Activated CD4-positive, alpha-beta memory T cell treated with anti-CD3 and anti-CD28 coated beads, Interleukin-2, amount 10 ng/mL, durations not matched to agents 7 days and 5 days (primary cell): ENCODE measurements at regions of chr1 and their contacts with region 1.

Region 1: DNA sequence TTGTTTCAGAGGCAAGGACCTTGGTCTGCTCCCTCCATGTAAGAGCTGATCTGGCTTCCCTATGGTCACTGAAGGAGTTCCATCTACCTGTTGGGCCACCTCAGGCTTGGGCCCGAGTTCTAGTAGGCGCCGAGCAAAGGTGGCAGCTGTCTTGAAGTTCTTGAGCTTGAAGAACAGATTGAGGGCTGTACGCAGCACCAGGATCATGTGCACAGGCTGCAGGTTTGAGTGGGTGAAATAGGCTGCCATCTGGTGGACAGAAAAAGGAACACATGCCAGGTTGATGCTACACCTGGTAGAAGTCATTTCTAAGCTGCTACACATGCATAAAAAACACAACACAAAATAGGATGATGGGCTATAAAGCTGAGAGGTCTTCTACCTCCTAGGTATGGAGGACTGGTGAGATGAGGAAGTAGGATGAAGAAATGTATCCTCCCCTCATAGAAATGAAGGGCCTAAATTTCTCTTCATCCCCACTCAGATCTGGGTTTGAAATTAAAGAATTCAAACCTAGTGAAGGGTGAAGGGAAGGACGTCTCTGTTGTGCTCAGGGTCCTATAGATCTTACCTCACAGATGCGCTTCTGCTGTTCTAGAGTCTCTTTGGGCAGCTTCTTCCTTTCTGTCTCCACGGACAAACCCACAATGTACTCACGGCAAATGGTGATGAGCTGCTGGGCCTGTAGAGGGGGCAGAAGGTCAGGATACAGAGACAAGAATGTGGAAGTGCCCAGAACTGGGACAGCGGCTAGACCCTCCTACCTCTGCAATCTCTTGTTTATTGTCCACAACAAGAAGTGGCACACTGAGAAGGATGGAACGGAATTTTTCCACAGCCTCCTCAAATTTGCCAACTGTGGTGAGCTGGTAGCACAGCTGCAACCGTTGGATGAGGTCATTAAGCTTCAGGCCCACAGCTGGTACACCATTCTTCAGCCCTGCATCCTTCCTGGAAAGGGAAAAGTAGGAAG is 6.6 kb upstream of the PEX19 start:
- DNase-seq: peak; percentile 73
- H3K4me3 Mint-ChIP-seq: no peak overlapping the region
- H3K27ac Mint-ChIP-seq: no peak overlapping the region
- H3K4me1 Mint-ChIP-seq: no peaks in the 10 kb centered on the region
- H3K27me3 Mint-ChIP-seq: no peaks in the 10 kb centered on the region

Region 2: DNA sequence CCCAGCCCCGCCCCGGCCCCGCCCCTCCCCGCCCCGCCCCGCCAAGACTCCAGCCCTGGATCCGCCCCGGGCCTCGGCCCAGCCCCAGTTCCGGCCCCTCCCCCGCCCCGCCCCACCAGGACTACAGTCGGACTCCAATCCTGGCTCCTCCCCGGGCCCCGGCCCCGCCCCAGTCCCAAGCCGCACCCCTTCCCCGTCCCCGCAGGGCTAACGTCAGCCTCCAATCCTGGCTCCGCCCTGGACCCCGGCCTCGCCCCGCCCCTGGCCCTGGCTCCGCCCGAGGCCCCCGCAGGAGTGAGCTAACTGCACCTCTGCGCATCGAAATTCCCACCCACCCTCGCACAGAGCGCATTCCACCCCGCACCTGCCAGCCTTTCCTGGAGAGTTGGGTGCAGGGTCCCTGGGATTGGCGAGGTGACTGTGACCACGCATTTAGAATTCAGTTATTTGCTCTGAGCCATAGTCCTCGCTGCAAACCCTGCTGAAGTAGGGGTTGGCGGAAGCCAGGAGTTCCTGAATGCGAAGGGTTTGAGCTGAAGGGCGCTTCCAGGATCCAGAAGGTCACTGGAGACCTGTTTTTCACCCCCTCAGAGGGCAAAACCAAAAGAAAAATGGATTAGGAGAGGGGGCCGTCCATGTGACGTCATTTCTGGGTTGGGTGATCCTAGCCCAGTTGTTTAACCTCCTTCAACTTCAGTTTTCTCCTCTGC is 192.5 kb before region 1 on chr1:
- CTCF ChIA-PET with region 1: interaction called, 25 read pairs
- POLR2A ChIA-PET with region 1: interaction called, 5 read pairs
- DNase-seq: peak; percentile 98
- H3K4me3 Mint-ChIP-seq: peak overlapping the region; percentile 69
- H3K27ac Mint-ChIP-seq: peak overlapping the region; percentile 75
- H3K4me1 Mint-ChIP-seq: peaks cover 38% of the 10 kb centered on the region
- H3K27me3 Mint-ChIP-seq: no peaks in the 10 kb centered on the region

Region 3: DNA sequence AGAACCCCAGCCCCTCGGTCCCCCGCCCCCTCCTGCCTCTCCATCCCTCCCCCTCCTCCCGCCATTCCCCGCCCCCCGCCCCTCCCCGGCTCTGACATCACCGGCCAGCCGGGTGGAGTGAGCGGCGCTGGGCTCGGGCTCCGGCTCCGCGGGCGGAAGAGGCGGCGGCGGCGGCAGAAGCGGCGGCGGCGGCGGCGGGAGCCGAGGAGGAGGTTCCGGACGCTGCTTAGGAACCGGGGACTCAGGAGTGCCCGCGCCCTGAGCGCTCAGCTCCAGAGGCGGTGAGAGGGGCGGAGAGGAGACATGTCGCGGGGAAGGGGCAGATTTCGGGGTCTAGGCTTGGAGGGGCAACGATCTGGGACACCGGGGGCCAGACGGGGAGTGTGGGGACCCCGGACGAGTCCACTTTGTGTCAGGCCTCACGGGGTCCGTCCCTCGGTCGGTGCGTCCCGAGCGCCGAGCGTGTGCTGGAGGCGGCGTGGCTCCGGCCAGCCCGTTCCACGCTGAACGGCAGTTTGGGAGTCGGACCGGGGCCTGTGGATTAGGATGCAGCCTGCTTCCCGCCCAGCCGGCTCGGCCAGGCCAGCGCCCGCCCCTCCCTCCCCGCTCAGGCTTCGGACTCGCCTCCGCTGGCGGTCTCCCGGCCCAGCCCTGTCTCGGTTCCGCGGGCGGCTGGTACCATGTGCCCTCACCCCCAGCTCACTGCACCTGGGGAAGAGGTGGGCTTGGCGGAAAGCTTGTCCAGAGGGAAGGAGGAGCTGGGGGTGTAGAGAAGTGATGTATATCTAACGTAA is 86.1 kb before region 1 on chr1 and contains the start of gene PEA15:
- CTCF ChIA-PET with region 1: interaction called, 12 read pairs
- POLR2A ChIA-PET with region 1: no interaction called
- DNase-seq: peak; percentile 76
- H3K4me3 Mint-ChIP-seq: peak within 1 kb of the TSS; percentile 86
- H3K27ac Mint-ChIP-seq: peak within 1 kb of the TSS; percentile 81
- H3K4me1 Mint-ChIP-seq: peaks cover 44% of the 10 kb centered on the region
- H3K27me3 Mint-ChIP-seq: no peaks in the 10 kb centered on the region
- total RNA-seq, gene PEA15: 38.2 to 39.3 TPM

Region 4: GRCh38 chr1:160232911-160233310 is 58.6 kb before region 1 on chr1:
- CTCF ChIA-PET with region 1: interaction called, 14 read pairs
- POLR2A ChIA-PET with region 1: interaction called, 3 read pairs
- DNase-seq: no peak
- H3K4me3 Mint-ChIP-seq: no peak overlapping the region
- H3K27ac Mint-ChIP-seq: no peak overlapping the region
- H3K4me1 Mint-ChIP-seq: peaks cover 5% of the 10 kb centered on the region
- H3K27me3 Mint-ChIP-seq: no peaks in the 10 kb centered on the region

Region 5: GRCh38 chr1:160261893-160262794 is 29.4 kb before region 1 on chr1 and contains the start of gene DCAF8:
- CTCF ChIA-PET with region 1: interaction called, 42 read pairs
- POLR2A ChIA-PET with region 1: interaction called, 16 read pairs
- DNase-seq: peak; percentile 98
- H3K4me3 Mint-ChIP-seq: peak within 1 kb of the TSS; percentile 92
- H3K27ac Mint-ChIP-seq: peak within 1 kb of the TSS; percentile 99
- H3K4me1 Mint-ChIP-seq: peaks cover 51% of the 10 kb centered on the region
- H3K27me3 Mint-ChIP-seq: no peaks in the 10 kb centered on the region
- total RNA-seq, gene DCAF8: 123 to 125 TPM

Region 6: DNA sequence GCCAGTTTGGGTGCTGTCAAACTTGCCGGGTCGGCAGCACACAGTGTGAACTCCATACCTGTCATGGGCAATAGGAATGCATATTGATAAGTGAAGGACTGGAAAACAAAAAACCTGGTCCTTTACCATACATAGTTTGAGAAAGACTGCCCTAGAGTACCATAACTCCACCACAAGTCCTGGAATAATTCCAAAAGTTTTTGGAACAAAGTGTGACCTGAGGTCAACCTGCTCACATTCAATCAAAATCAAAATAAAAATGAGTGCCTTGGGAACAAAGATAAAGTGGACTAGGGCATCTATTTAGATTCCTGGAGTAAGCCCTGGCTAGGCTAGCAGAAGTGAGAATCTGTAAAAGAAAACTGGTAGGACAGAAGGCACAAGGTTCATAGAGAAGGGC is 14.2 kb before region 1 on chr1:
- CTCF ChIA-PET with region 1: interaction called, 11 read pairs
- POLR2A ChIA-PET with region 1: interaction called, 3 read pairs
- DNase-seq: no peak
- H3K4me3 Mint-ChIP-seq: no peak overlapping the region
- H3K27ac Mint-ChIP-seq: no peak overlapping the region
- H3K4me1 Mint-ChIP-seq: no peaks in the 10 kb centered on the region
- H3K27me3 Mint-ChIP-seq: no peaks in the 10 kb centered on the region

Region 7: GRCh38 chr1:160342953-160343869 is 51.7 kb after region 1 on chr1 and contains the starts of genes COPA and NCSTN:
- CTCF ChIA-PET with region 1: interaction called, 10 read pairs
- POLR2A ChIA-PET with region 1: interaction called, 3 read pairs
- DNase-seq: peak; percentile 92
- H3K4me3 Mint-ChIP-seq: peak within 1 kb of the TSS; percentile 99
- H3K27ac Mint-ChIP-seq: peak within 1 kb of the TSS; percentile 97
- H3K4me1 Mint-ChIP-seq: peaks cover 59% of the 10 kb centered on the region
- H3K27me3 Mint-ChIP-seq: no peaks in the 10 kb centered on the region
- total RNA-seq, gene COPA: 145 to 146 TPM
- total RNA-seq, gene NCSTN: 64.5 to 65.3 TPM